Transverse colon (tissue), 4 donors: ENCODE measurements at regions of chr15 and their contacts with region 1.

Region 1: DNA sequence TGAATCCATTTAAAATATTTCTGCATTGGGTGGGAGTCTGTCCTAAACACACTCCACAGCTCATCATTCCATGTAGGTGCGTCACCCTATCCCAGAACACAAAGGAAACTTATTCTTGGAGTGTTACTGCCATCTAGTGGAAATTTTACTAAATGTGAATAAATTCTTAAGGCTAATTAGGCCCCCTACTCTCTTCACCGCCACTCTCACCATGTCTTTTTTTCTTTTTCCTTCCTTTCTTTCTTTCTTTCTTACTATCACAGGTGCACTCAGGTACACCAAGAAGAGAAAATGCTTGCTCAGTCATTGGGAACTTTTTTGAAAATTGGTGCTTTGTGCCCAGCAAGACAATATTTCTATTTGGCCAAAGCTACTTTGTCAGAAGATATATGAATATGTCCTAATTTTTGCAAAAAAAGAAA is 26.4 kb upstream of the ATP8B4 start:
- DNase-seq: no peak
- H3K4me3 ChIP-seq: no peak overlapping the region
- H3K27ac ChIP-seq: no peak overlapping the region
- H3K4me1 ChIP-seq: peaks cover 0 to 6% (median 0%) of the 10 kb centered on the region in 4 donors
- H3K27me3 ChIP-seq: no peaks in the 10 kb centered on the region
- CTCF ChIP-seq: peak; percentile 51 to 74 (median 61)
- EP300 ChIP-seq: no peak
- POLR2A ChIP-seq: no peak

Region 2: DNA sequence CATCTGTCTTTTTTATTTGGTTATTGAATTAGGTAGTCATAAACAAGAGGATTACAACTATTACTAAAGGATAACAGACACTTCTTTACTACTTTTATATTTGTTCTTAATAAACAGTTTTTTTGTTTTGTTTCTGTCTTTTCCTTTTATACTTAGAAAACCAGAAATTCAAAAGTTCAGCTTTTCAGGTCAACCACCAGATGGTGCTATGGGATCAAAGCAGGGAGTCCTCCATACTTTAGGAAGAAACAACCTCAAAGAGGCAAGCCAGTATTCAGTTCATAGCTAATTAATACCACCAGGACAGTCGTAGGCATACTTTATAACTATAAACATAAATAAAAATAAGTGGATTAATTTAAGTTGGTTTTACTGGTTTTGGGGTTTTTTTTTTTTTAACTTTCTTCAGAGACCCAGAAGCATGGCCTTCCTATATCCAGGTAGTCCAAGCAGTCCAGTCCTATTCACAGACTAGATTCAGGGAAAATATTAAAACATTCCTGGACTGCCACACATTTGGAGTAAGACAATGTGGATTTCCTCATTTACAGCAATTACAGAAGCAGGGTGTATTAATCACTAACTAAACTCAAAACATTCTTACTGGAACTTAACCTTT is 1283.5 kb before region 1 on chr15:
- in situ Hi-C with region 1: loop called (anchors 10 to 25 kb)
- intact Hi-C with region 1: loop called (anchors 5 kb)
- DNase-seq: peak; percentile 8
- H3K4me3 ChIP-seq: no peak overlapping the region
- H3K27ac ChIP-seq: no peak overlapping the region
- H3K4me1 ChIP-seq: no peaks in the 10 kb centered on the region
- H3K27me3 ChIP-seq: no peaks in the 10 kb centered on the region
- CTCF ChIP-seq: peak; percentile 77 to 91 (median 80)
- EP300 ChIP-seq: no peak
- POLR2A ChIP-seq: no peak

Region 3: DNA sequence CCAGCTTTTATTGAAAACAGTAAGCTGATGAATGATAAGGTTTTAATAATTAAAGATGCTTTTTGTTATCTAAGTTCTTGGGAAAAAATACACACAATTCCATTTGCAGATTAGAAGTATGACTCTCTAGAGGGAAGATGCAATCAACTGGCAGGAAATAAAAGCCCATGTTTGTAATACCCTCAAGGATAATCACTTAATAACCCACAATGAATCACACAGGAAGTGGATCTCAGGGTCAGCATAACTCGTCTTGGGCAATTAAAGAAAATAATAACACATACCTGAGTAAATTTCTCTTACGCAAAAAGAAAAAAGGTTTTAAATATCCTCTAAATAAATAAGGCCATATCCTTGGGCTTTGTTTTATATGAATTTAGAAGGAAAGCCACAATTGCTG is 1276.9 kb before region 1 on chr15:
- in situ Hi-C with region 1: loop called (anchors 10 to 25 kb)
- intact Hi-C with region 1: loop called (anchors 5 kb)
- DNase-seq: no peak
- H3K4me3 ChIP-seq: no peak overlapping the region
- H3K27ac ChIP-seq: no peak overlapping the region
- H3K4me1 ChIP-seq: no peaks in the 10 kb centered on the region
- H3K27me3 ChIP-seq: peaks cover 12% of the 10 kb centered on the region
- CTCF ChIP-seq: no peak
- EP300 ChIP-seq: no peak
- POLR2A ChIP-seq: no peak

Region 4: DNA sequence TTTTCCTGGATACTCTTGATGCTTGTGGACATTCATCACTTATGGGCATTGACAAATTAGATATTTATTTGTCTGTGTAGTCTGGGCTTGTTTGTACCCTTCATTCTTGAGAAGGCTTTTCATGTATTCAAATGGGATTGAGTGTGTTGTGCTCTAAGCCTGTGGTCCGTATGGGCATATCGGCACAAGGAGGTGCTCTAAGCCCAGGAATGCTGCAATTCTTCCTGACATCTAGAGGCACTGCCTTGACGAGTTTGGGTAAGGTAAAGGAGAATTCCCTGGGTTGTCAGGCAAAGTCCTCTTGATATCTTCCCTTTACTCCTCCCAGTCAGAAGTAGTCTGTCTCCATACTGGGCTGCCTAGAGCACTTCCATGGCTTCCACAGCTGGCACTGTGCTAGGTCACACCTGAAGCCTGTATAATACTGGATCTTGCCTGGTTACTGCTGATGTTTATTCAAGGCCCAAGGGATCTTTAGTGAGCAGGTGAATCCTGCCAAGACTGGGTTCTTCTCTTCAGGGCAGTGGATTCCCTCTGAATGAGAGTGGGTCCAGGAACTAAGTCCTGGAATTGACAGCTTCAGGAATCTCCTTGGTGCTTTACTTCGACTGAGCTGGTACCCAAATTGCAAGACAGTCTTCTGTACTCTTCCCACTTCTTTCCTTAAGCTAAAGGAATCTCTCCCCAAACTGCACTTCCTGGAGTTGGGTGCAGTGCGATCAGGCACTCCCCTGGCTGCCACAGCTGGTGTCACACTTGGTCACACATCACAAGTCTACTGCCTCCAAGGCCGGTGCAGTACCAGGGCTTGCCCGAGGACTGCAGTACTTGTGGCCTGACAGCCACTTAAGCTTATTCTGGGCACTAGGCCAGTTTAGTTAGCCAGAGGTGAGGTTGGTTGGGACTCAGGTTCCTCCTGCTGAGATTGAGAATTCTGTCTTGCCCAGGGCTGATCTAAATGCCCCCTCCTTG is 929.4 kb before region 1 on chr15:
- in situ Hi-C with region 1: loop called in 1 of 4 experiments (anchors 25 kb)
- intact Hi-C with region 1: no loop called
- DNase-seq: peak; percentile 11
- H3K4me3 ChIP-seq: no peak overlapping the region
- H3K27ac ChIP-seq: no peak overlapping the region
- H3K4me1 ChIP-seq: peaks cover 0 to 7% (median 0%) of the 10 kb centered on the region in 4 donors
- H3K27me3 ChIP-seq: no peaks in the 10 kb centered on the region
- CTCF ChIP-seq: no peak
- EP300 ChIP-seq: no peak
- POLR2A ChIP-seq: no peak

Region 5: GRCh38 chr15:49235446-49236124 is 909.9 kb before region 1 on chr15:
- in situ Hi-C with region 1: loop called in 1 of 4 experiments (anchors 25 kb)
- intact Hi-C with region 1: no loop called
- DNase-seq: peak; percentile 44
- H3K4me3 ChIP-seq: no peak overlapping the region
- H3K27ac ChIP-seq: peak overlapping the region; percentile 1 to 52 (median 32)
- H3K4me1 ChIP-seq: peaks cover 0 to 32% (median 18%) of the 10 kb centered on the region in 4 donors
- H3K27me3 ChIP-seq: no peaks in the 10 kb centered on the region
- CTCF ChIP-seq: peak; percentile 61 to 78 (median 66)
- EP300 ChIP-seq: no peak
- POLR2A ChIP-seq: no peak

Region 6: DNA sequence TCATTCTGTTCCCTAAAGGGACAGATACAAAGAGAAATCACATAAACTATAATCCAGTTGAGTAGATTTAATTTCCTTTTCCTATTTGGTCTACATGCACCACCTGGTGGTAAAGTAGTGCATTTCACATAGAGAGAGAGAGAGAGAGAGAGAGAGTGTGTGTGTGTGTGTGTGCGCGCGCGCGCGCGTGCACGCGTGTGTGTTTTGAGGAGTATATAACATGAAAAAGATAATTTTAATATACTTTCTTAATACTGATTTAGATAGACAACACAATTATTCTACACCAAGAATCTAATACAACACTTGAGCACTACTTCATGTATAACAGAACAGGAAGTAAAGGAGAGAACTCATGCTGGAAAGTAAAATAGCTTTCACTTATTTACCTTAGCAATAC is 723.5 kb before region 1 on chr15:
- in situ Hi-C with region 1: loop called in 1 of 4 experiments (anchors 25 kb)
- intact Hi-C with region 1: no loop called
- DNase-seq: peak; percentile 24
- H3K4me3 ChIP-seq: peak overlapping the region in 2 of 4 donors; percentile 3 to 43
- H3K27ac ChIP-seq: peak overlapping the region; percentile 71 to 80 (median 72)
- H3K4me1 ChIP-seq: peaks cover 0 to 2% (median 0%) of the 10 kb centered on the region in 4 donors
- H3K27me3 ChIP-seq: no peaks in the 10 kb centered on the region
- CTCF ChIP-seq: peak; percentile 73 to 96 (median 85)
- EP300 ChIP-seq: no peak
- POLR2A ChIP-seq: no peak

Region 7: DNA sequence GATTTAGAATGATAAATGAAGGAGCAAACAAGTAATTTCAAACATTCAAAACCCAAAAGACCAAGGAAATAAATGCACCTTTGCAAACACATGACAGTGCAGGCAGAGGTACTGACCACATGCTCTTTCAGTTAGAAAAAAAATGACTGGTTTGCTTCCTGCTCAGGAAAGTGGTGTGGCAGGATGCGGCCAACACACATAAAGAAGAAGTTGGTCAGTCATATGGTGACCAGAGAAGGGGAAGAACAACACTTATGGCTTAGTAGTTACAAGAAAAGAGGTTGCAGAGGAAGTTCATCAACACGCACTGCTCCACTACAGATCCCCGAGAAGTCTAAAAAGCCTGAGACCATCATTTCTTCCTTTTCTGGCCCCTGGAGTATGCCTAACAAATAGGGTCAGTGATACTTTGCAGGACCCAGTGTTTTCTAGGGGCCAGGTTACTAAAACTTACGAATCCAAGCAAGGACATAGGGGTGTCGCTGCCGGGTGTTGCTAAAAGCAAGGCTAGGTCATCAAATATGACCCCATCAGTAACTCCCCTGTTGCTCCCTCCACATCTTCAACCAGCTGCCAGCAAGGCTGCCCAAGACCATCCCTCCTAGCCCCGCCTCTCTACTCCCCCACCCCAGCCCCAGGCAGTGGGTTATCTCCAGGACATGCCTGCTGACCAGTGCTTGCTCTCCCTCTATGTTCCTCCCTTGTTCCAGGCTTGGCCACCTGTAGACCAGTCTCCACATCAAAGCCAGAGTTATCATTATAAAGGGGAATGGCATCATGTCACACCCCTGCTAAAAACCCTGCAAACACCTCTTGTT is 37.7 kb before region 1 on chr15:
- in situ Hi-C with region 1: no loop called
- intact Hi-C with region 1: no loop called
- DNase-seq: no peak
- H3K4me3 ChIP-seq: no peak overlapping the region
- H3K27ac ChIP-seq: peak overlapping the region; percentile 44 to 58 (median 54)
- H3K4me1 ChIP-seq: peaks cover 0 to 4% (median 0%) of the 10 kb centered on the region in 4 donors
- H3K27me3 ChIP-seq: no peaks in the 10 kb centered on the region
- CTCF ChIP-seq: no peak
- EP300 ChIP-seq: no peak
- POLR2A ChIP-seq: no peak

Region 8: GRCh38 chr15:50176869-50177268 is 31.4 kb after region 1 on chr15:
- in situ Hi-C with region 1: no loop called
- intact Hi-C with region 1: no loop called
- DNase-seq: no peak
- H3K4me3 ChIP-seq: no peak overlapping the region
- H3K27ac ChIP-seq: no peak overlapping the region
- H3K4me1 ChIP-seq: peaks cover 0 to 5% (median 3%) of the 10 kb centered on the region in 4 donors
- H3K27me3 ChIP-seq: peaks cover 1% of the 10 kb centered on the region
- CTCF ChIP-seq: no peak
- EP300 ChIP-seq: no peak
- POLR2A ChIP-seq: no peak